PC-9 (cell line): ENCODE measurements at regions of chr16 and their contacts with region 1.

Region 1: GRCh38 chr16:55508941-55509931 is at the start of gene LPCAT2:
- DNase-seq: peak; percentile 71 to 84
- H3K4me3 ChIP-seq: peak within 1 kb of the TSS; percentile 76
- H3K27ac ChIP-seq: peak within 1 kb of the TSS; percentile 41
- H3K4me1 ChIP-seq: peaks cover 17% of the 10 kb centered on the region
- H3K27me3 ChIP-seq: no peaks in the 10 kb centered on the region
- CTCF ChIP-seq: 0 out of 2 replicates have a peak, but pooled peaks have one; percentile 22
- total RNA-seq, gene LPCAT2: 87.7 and 92.6 TPM in 2 replicates

Region 2: DNA sequence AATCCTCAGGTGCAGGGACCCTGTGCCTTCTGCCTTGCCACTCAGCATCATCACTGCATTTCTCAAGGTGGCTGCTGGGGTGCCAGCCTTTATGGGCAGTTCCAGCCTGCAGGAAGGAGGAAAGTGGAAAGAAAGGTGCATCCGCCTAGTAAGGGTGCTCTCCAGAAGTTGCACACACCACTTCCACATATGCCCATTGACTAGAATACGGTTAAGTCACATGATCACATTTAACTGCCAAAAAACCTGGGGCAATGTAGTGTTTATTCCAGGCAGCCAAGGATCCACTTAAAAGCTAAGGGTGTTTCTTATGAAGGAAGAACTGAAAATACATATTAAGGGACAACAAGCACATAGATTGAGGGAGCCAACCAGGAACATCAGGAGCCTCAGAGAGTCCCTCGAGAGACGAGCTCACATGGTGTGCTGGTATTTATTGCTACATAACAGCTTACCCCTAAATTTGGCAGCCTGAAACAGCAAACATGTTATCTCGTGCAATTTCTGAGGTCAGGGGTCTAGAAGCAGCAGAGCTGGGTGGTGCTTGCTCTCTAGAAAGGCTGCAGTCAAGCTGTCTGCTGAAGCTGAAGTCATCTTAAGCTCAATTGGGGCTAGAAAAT is 82.3 kb before region 1 on chr16:
- CTCF ChIA-PET with region 1: no interaction called
- POLR2A ChIA-PET with region 1: no interaction called
- intact Hi-C with region 1: no loop called
- DNase-seq: no peak
- H3K4me3 ChIP-seq: no peak overlapping the region
- H3K27ac ChIP-seq: no peak overlapping the region
- H3K4me1 ChIP-seq: no peaks in the 10 kb centered on the region
- H3K27me3 ChIP-seq: peaks cover 5% of the 10 kb centered on the region; the same call in 1 of the 2 replicates
- CTCF ChIP-seq: no peak

Region 3: DNA sequence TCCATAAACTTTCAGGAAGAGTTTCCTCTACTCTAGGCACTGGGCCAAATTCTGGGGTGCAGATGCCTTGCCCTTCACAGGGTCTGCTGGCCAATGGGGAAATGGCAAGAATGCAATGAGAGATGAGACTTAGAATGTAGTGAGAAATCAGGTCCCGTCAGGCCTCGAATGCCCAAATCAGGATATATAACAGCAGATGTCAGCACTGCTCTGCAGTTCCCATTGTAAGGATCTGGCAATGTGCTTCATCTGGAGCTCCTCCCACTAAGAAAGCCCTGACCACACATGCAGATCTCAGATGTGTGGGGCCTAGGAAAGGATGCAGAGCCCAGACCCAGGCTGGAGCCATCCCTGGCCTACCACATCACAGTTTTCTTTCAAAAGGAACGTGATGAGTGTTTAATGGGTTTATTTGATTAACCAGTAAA is 14.2 kb before region 1 on chr16:
- CTCF ChIA-PET with region 1: interaction called, 17 read pairs
- POLR2A ChIA-PET with region 1: no interaction called
- intact Hi-C with region 1: no loop called
- DNase-seq: no peak
- H3K4me3 ChIP-seq: no peak overlapping the region
- H3K27ac ChIP-seq: no peak overlapping the region
- H3K4me1 ChIP-seq: peaks cover 15% of the 10 kb centered on the region
- H3K27me3 ChIP-seq: no peaks in the 10 kb centered on the region
- CTCF ChIP-seq: no peak; the same call in 1 of the 2 replicates

Region 4: DNA sequence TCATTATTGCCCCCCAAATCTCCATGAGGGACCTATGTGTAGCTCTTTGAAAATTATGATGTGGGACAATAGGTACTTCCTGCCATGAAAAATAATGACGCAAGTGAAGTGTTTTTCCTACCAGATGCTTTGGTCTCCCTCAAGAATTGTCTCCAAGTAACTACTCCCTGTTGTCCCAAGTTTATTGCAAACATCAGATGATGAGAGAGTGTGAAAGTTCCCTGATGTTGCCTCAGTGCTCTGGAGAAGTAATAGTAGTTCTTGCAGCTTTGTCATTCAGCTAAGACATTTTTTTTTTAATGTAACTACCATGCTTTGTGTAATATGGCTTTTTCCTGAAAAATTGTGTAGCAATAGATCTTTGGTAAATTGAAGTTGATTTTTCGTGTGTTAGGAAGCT is 19.8 kb after region 1 on chr16:
- CTCF ChIA-PET with region 1: no interaction called
- POLR2A ChIA-PET with region 1: no interaction called
- intact Hi-C with region 1: no loop called
- DNase-seq: no peak
- H3K4me3 ChIP-seq: no peak overlapping the region
- H3K27ac ChIP-seq: no peak overlapping the region
- H3K4me1 ChIP-seq: peaks cover 14% of the 10 kb centered on the region
- H3K27me3 ChIP-seq: no peaks in the 10 kb centered on the region
- CTCF ChIP-seq: no peak

Region 5: GRCh38 chr16:55567382-55567781 is 58.1 kb after region 1 on chr16:
- CTCF ChIA-PET with region 1: interaction called, 12 read pairs
- POLR2A ChIA-PET with region 1: no interaction called
- intact Hi-C with region 1: no loop called
- DNase-seq: no peak
- H3K4me3 ChIP-seq: no peak overlapping the region
- H3K27ac ChIP-seq: no peak overlapping the region
- H3K4me1 ChIP-seq: no peaks in the 10 kb centered on the region
- H3K27me3 ChIP-seq: no peaks in the 10 kb centered on the region
- CTCF ChIP-seq: no peak